ENCODE measurements at regions of chr15 and their contacts with region 1.

Region 1: GRCh38 chr15:74302821-74303359 is 64.6 kb downstream of the CYP11A1 start:
- DNase-seq: peak; percentile 54
- H3K4me3 Mint-ChIP-seq: no peak overlapping the region
- H3K27ac Mint-ChIP-seq: no peak overlapping the region
- H3K4me1 Mint-ChIP-seq: peaks cover 5% of the 10 kb centered on the region
- H3K27me3 Mint-ChIP-seq: peaks cover 83% of the 10 kb centered on the region
- CTCF ChIP-seq: peak; percentile 69

Region 2: DNA sequence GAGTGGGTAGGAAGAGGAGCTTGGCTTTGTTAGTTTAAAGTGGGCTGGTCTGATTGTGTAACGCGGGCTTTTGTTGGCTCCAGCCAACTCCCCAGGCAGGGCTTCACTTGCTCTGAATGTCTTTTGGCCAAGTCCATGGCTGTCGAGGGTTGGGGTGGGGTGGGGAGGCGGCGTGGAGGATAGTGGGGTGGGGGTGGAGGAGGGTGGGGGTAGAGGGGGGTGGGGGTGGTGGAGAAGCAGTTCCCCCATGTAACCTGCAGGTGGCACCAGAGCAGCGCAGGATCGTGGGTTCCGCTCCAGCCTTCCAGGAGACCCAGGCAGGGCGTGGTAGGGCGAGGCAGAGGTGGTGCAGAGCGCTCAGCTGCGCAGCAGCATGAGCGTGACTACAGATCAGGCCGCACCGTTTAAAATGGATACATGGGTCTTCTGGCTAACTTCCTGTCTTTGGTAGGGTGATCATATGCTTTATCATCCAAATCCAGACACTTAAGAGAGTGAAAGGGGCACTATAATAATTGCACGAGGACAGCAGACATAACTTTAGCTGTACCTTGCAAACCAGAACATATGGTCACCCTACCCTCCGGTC is 248.9 kb before region 1 on chr15:
- CTCF ChIA-PET with region 1: interaction called, 39 read pairs
- POLR2A ChIA-PET with region 1: no interaction called
- intact Hi-C with region 1: no loop called
- DNase-seq: peak; percentile 75
- H3K4me3 Mint-ChIP-seq: no peak overlapping the region
- H3K27ac Mint-ChIP-seq: no peak overlapping the region
- H3K4me1 Mint-ChIP-seq: peaks cover 33% of the 10 kb centered on the region
- H3K27me3 Mint-ChIP-seq: no peaks in the 10 kb centered on the region
- CTCF ChIP-seq: peak; percentile 71

Region 3: DNA sequence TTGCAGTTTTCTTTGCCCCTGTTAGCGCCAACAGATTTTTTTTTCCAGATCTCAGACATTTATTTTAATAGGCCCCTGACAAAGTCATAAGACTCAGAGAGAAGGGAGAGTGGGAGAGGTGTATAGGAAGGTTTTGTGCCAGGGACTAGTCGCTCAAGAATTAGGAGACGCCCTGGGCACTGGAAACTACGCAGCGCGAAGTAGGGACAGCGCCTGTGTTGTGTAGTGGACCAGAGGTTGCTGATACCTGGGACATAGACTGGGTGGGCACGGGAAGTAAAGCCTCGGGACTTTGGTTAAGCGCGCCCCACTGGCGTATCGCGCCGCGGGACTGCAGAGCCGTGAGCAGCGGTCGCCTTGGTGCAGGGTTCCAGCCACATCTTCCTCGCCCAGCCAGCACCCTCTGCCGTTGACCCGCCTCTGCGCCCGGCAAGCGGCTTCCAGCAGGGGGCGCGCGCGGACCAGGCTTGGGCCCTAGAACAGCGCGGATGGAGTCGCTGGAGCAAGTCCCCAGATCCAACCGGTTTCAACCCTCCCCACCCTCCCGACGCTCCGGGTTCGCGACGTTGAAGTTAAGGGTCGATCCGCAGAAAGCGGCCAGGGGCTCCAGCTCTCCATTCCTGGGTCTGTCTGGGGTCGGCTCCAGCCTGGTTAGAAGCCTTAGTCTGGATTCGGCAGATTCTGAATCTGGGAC is 175.5 kb before region 1 on chr15:
- CTCF ChIA-PET with region 1: interaction called, 46 read pairs
- POLR2A ChIA-PET with region 1: interaction called, 4 read pairs
- intact Hi-C with region 1: loop called (anchors 1 kb)
- DNase-seq: peak; percentile 84
- H3K4me3 Mint-ChIP-seq: peak overlapping the region; percentile 46
- H3K27ac Mint-ChIP-seq: no peak overlapping the region
- H3K4me1 Mint-ChIP-seq: no peaks in the 10 kb centered on the region
- H3K27me3 Mint-ChIP-seq: peaks cover 87% of the 10 kb centered on the region
- CTCF ChIP-seq: peak; percentile 98

Region 4: DNA sequence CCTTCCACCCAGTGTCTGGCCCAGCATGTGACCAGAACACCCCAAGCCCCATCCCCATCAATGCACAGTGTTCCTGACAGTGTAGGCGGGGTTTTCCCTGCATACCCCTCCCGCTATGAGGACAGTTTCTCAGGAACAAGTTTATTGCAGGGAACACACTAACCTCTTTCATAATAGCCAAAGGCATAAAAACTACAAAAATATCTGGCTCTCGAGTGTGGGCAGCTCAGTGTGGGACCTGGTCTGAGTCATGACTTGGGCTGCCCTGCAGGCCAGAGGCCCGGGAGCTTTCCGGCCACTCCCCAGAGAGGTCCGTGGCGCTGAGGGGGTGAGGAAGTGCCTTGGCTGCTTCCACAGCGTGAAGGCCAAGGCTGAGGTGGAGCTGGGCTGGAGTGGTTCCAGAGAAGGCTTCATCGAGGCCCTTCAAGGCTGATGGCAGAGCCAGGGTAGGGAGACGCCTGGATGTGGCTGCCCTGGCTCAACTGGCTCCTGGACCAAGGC is 123.5 kb before region 1 on chr15:
- CTCF ChIA-PET with region 1: interaction called, 3 read pairs
- POLR2A ChIA-PET with region 1: no interaction called
- intact Hi-C with region 1: loop called (anchors 1 kb)
- DNase-seq: peak; percentile 98
- H3K4me3 Mint-ChIP-seq: no peak overlapping the region
- H3K27ac Mint-ChIP-seq: peak overlapping the region; percentile 41
- H3K4me1 Mint-ChIP-seq: peaks cover 38% of the 10 kb centered on the region
- H3K27me3 Mint-ChIP-seq: no peaks in the 10 kb centered on the region
- CTCF ChIP-seq: no peak

Region 5: DNA sequence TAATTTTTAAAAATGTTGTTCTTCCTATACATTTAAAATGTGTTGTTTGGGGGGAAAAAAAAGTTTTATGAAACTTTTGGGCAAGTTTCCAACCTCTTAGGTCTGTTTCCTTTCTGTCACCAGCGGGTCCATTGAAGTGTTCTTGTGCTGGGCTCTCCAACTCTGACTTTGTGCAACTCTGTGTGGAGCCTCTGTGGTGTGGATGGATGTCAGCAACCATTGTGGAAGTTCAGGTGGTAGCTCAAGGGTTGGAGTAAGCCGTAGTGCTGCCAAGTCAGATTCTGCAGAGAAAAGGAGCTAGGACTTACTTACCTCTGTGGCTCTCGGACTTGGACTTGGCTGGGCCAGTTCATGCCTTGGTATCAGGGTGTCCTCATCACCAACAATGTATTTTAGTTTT is 260.6 kb after region 1 on chr15:
- CTCF ChIA-PET with region 1: no interaction called
- POLR2A ChIA-PET with region 1: no interaction called
- intact Hi-C with region 1: no loop called
- DNase-seq: no peak
- H3K4me3 Mint-ChIP-seq: no peak overlapping the region
- H3K27ac Mint-ChIP-seq: no peak overlapping the region
- H3K4me1 Mint-ChIP-seq: no peaks in the 10 kb centered on the region
- H3K27me3 Mint-ChIP-seq: no peaks in the 10 kb centered on the region
- CTCF ChIP-seq: no peak

Measured in MCF 10A (cell line).